ENCODE measurements at regions of chr1 and their contacts with region 1.

Region 1: DNA sequence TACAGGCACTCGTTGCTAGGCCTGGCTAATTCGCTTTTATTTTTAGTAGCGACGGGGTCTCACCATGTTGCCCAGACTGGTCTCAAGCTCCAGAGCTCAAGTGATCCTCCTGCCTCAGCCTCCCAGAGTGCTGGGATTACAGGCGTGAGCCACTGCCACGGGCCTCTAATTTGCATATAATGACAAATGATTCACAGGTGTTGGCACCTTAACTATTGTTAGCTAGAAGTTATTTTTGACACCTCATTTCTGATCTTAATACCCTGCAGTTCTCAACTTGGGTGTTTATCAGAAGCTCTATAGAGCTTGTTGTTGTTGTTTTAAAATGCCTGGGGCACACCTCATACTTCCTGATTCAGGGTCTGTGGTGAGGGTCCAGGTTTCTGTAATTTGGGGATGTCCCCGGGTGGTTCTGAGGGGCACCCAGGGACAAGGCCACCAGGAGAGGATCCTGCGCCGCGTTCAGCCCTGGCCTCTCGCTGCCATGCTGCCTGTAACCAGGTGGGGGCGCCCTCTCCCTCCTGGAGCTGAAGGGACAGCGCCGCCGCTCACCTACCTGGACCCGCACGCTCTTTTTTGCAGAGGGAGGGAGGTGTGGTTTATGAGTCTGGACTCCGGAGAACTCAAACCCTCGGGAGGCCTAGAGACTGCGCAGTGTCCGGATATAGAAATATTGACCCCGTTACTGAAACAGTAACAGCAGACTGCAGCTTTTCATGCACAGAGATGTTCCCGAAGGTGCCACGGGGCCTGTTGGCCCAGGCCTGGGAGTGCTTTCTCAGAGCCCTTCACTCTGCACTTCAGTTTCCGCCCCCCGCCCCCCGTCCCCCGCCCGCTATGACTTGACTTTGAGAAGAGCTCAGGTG is 23.0 kb upstream of the NEK2 start:
- DNase-seq: peak; percentile 79 to 98 (median 87)
- ATAC-seq: peak; percentile 95 to 100 (median 99)
- H3K4me3 ChIP-seq: peak overlapping the region in 1 of 4 donors; percentile 26
- H3K27ac ChIP-seq: no peak overlapping the region
- H3K4me1 ChIP-seq: no peaks in the 10 kb centered on the region
- H3K27me3 ChIP-seq: no peaks in the 10 kb centered on the region
- CTCF ChIP-seq: peak; percentile 93 to 97 (median 96)

Region 2: GRCh38 chr1:211625040-211625439 is 73.4 kb before region 1 on chr1:
- intact Hi-C with region 1: no loop called
- DNase-seq: no peak
- ATAC-seq: peak in 3 of 4 donors; percentile 43 to 66 (median 52)
- H3K4me3 ChIP-seq: no peak overlapping the region
- H3K27ac ChIP-seq: no peak overlapping the region
- H3K4me1 ChIP-seq: no peaks in the 10 kb centered on the region
- H3K27me3 ChIP-seq: no peaks in the 10 kb centered on the region
- CTCF ChIP-seq: no peak

Region 3: DNA sequence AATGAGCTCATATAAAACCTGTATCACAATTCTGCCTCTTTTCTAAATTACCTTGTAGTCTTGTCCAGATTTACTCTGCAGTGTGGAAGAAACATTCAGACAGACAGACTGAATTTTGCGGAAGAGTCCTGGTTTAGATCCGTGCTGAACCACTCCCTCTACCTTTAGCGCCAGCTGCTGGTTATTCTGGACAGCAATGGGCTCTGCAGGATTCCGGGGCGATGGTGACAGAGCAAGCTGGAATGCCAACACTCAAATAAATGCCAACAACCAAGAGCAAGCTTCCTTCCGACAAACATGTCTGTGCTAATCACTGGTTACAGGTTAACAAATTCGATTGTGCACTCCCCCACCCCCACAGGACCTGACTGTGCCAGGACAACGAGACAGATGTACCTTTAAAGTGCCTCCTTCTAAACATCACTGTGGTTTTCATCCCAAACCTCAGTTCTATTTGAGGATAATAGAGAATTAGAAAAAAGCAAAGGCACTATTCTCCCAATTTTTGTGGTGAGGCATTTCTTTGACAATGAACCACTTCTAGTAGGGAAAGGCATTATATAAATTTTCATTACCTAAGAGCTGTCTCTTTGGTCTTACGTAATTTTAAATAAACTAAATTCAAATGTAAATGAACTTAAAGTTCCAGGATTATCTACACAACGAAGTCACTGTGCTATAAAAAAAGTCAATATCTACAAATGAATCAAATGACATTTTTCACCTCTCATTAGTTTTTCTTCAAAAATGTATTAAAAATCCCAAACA is 246.5 kb after region 1 on chr1:
- intact Hi-C with region 1: loop called in 1 of 3 experiments (anchors 5 kb)
- DNase-seq: peak in 5 of 6 donors; percentile 67 to 82 (median 75)
- ATAC-seq: peak; percentile 90 to 94 (median 93)
- H3K4me3 ChIP-seq: no peak overlapping the region
- H3K27ac ChIP-seq: peak overlapping the region in 2 of 4 donors; percentile 54 to 58
- H3K4me1 ChIP-seq: peaks cover 0 to 12% (median 7%) of the 10 kb centered on the region in 3 donors
- H3K27me3 ChIP-seq: no peaks in the 10 kb centered on the region
- CTCF ChIP-seq: peak in 3 of 4 donors; percentile 14 to 45 (median 37)

Measured in pancreas (tissue), 10 donors.